A549 (cell line): ENCODE measurements at regions of chr12 and their contacts with region 1.

Region 1: DNA sequence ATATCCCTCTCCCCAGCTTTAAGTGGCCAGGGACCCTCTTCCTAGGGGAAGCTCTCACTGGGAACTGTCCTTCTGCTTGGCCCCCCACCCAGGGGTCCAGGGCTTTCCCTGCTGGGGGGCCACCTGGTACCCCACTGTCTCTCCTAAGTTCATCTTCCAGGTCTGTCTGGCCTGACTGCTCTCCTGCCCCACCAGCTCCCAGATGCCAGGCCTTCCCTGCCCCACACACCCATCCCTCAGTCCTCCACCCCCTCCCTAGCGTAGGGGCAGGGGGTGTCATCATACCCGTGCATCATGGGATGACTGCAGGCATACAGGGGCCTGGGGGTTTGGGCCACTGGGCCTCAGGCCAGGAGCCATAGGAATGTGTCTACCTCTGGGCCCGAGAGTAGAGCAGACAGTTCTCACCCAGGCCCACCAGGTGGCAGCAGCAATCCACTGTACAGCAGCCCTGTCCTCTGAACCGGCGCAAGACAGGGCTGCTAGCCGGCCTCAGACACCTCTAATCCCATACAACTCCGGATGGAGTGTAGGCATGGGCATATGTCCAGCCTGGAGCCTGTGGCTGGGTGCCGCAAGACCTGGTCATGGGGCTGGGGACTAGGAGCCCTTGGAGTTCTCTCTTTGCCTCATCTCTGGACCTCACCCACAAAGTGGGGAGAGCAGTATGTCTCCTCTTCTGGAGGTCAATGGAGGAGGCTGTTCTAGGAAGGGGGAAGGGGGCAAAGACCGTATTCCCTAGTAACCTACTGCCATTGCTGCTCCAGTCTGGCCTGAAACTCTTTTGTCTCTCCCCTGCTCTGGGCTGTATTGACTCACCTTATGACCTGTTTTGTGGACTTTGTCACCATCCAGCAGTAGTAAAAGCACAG is 10.0 kb upstream of the SMARCD1 start:
- DNase-seq: peak; percentile 79 to 86
- ATAC-seq: peak; percentile 88 to 95
- H3K4me3 ChIP-seq: no peak overlapping the region
- H3K27ac ChIP-seq: peak overlapping the region in 1 of 2 experiments; percentile 59; a peak in 3 of 6 replicates
- H3K4me1 ChIP-seq: peaks cover 16% of the 10 kb centered on the region
- CTCF ChIP-seq: peak; percentile 94
- EP300 ChIP-seq: no peak
- POLR2A ChIP-seq: no peak
- RAD21 ChIP-seq: peak; percentile 98

Region 2: DNA sequence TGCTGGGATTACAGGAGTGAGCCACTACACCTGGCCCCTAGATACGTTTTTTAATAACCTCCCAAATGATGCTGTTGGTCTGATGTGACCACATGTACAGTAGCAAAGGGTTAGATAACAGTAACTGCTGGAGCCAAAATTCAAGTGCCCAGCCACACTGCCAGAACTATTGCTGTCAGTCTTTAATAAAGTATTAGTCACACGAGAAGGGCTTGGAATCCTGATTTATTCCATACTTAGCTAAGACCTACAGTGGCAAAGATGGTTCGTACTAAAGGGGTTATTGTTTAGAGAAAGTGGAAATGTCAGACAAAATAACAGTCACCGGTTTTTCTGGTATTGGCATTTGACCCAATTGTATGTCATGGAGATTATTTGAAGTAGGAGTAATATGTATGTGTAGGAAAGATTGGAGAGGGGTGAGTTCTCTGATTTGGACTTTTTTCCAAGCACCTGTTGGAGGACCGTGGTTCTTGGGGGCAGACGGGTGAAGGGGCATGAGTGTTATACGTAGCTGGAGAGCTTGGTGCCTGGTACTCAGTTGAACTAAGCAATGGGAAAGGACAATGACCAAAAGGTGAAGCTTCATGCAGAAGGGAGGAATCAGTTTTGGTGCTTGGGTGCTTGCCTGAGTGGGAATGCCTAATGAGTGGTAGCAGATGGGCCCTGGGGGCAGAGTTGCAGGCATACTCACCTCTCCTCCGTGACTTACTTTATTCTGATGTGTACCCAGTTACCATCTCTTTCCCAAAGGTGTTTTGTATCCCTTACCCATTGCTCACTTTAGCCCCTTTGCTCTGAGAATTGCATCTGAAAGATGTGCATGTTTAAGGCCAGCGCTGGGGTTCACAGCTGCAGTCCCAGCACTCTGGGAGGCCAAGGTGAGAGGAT is 800.5 kb before region 1 on chr12:
- CTCF ChIA-PET with region 1: no interaction called
- POLR2A ChIA-PET with region 1: no interaction called
- DNase-seq: no peak
- ATAC-seq: peak; percentile 15 to 20
- H3K4me3 ChIP-seq: no peak overlapping the region
- H3K27ac ChIP-seq: no peak overlapping the region
- H3K4me1 ChIP-seq: peaks cover 14% of the 10 kb centered on the region
- CTCF ChIP-seq: no peak
- EP300 ChIP-seq: no peak
- POLR2A ChIP-seq: no peak
- RAD21 ChIP-seq: no peak

Region 3: DNA sequence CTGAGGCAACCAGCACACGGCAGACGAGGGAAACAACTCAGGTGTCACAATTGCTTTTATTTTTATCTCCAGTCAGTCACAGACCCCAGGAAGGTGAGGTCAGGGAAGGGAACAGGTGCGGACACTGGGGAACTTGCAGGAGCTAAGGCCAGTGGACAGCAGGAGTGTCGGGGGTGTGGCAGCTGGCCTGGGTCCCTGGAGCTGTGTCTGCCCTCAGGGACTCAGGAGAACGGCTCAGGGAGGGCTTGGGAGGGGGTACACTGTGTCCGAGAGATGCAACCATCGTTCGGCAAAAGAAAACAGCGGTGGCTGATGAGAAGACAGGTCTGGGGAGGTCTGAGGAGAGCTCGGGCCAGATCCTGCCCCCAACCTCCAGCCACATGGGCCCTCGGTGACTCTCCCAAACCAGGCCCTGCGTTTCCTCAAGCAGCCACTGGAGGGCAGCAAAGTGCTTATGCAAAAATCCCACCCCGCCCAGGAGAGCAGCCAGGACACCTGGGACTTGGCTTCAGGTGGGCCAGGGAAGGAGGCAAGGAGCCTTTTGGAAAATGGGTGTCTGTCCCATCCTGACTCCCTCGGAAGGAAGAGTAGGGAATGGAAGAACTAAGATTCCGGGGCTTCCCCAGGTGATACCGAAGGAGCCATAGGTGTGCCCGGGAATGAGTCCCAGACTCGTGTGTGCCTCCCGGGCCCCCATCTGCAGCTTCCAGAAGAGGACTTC is 208.2 kb before region 1 on chr12:
- CTCF ChIA-PET with region 1: interaction called, 43 read pairs
- POLR2A ChIA-PET with region 1: no interaction called
- DNase-seq: peak; percentile 66 to 95
- ATAC-seq: peak; percentile 55 to 92
- H3K4me3 ChIP-seq: no peak overlapping the region
- H3K27ac ChIP-seq: peak overlapping the region in 1 of 2 experiments; percentile 22; a peak in 1 of 6 replicates
- H3K4me1 ChIP-seq: no peaks in the 10 kb centered on the region; the same call in 2 of the 3 replicates
- CTCF ChIP-seq: peak; percentile 88
- EP300 ChIP-seq: no peak
- POLR2A ChIP-seq: no peak
- RAD21 ChIP-seq: peak; percentile 84 to 91

Region 4: GRCh38 chr12:49945394-49946080 is 129.6 kb before region 1 on chr12:
- CTCF ChIA-PET with region 1: interaction called, 11 read pairs
- POLR2A ChIA-PET with region 1: no interaction called
- DNase-seq: peak; percentile 82 to 93
- ATAC-seq: peak; percentile 97 to 99
- H3K4me3 ChIP-seq: no peak overlapping the region
- H3K27ac ChIP-seq: peak overlapping the region; percentile 6 to 59; a peak in 3 of 6 replicates
- H3K4me1 ChIP-seq: 0 out of 3 replicates have a peak, but pooled peaks cover 7% of the 10 kb centered on the region
- CTCF ChIP-seq: peak; percentile 91
- EP300 ChIP-seq: no peak
- POLR2A ChIP-seq: no peak
- RAD21 ChIP-seq: peak; percentile 54 to 55; a peak in 4 of 5 replicates

Region 5: DNA sequence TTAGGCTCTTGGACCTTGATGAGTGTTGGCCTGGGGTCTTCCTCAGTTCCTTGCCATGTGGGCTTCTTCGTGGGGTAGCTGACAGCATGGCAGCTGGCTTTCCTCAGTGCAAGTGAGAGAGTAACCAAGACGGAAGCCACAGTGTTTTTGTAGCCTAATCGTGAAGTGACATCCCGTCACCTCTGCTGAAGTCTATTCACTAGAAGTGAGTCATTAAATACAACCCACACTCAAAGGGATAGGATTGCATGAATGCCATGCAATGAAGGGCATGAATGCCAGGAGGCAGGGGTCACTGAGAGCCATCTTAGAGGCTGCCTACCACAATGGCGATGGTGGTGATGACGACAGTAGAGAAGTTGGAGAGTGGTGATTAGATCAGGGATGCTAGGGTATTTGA is 31.3 kb before region 1 on chr12:
- CTCF ChIA-PET with region 1: interaction called, 185 read pairs
- POLR2A ChIA-PET with region 1: no interaction called
- DNase-seq: no peak
- ATAC-seq: no peak
- H3K4me3 ChIP-seq: no peak overlapping the region
- H3K27ac ChIP-seq: no peak overlapping the region
- H3K4me1 ChIP-seq: no peaks in the 10 kb centered on the region
- CTCF ChIP-seq: no peak
- EP300 ChIP-seq: no peak
- POLR2A ChIP-seq: no peak
- RAD21 ChIP-seq: no peak

Region 6: GRCh38 chr12:50111693-50112455 is 36.7 kb after region 1 on chr12 and contains the start of gene COX14:
- CTCF ChIA-PET with region 1: interaction called, 309 read pairs
- POLR2A ChIA-PET with region 1: no interaction called
- DNase-seq: peak; percentile 99 to 100
- ATAC-seq: peak; percentile 87 to 93
- H3K4me3 ChIP-seq: peak within 1 kb of the TSS; percentile 68
- H3K27ac ChIP-seq: peak within 1 kb of the TSS; percentile 74 to 90
- H3K4me1 ChIP-seq: peaks cover 29% of the 10 kb centered on the region
- CTCF ChIP-seq: peak; percentile 94
- EP300 ChIP-seq: no peak
- POLR2A ChIP-seq: peak; percentile 96
- RAD21 ChIP-seq: peak; percentile 40 to 48; a peak in 3 of 5 replicates
- polyA plus RNA-seq, gene COX14: 134 and 147 TPM in 2 replicates

Region 7: DNA sequence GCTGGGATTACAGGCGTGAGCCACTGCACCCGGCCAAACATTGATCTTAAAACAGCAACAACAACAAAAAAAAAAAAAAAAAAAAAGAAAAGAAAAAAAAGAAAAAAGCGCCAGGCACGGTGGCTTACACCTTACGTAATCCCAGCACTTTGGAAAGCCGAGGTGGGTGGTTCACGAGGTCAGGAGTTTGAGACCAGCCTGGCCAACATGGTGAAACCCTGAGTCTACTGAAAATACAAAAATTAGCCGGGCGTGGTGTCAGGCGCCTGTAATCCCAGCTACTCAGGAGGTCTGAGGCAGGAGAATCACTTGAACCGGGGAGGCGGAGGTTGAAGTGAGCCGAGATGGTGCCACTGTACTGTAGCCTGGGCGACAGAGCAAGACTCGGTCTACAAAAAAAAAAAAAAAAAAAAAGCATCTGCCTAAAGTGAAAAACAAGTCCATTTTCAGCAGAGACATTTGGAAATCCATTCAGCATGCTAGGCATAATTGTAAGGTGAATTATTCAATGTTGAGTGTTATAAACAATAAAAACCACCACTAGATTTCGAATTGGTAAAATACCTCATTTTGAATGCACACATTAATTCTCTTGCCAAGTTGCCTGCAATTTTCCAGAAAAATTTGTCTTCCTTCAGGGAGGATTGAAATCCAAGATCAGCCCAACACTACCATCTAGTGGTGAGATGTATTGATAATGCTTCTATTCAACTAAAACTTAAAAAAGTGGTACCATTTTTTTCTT is 100.0 kb after region 1 on chr12:
- CTCF ChIA-PET with region 1: interaction called, 205 read pairs
- POLR2A ChIA-PET with region 1: interaction called, 6 read pairs
- DNase-seq: peak; percentile 52 to 81
- ATAC-seq: peak in 1 of 2 experiments; percentile 72; a peak in 3 of 6 replicates
- H3K4me3 ChIP-seq: no peak overlapping the region
- H3K27ac ChIP-seq: no peak overlapping the region
- H3K4me1 ChIP-seq: 0 out of 3 replicates have a peak, but pooled peaks cover 4% of the 10 kb centered on the region
- CTCF ChIP-seq: peak; percentile 91
- EP300 ChIP-seq: no peak
- POLR2A ChIP-seq: no peak
- RAD21 ChIP-seq: peak; percentile 91 to 92